ENCODE measurements at regions of chr5 and their contacts with region 1.

Region 1: DNA sequence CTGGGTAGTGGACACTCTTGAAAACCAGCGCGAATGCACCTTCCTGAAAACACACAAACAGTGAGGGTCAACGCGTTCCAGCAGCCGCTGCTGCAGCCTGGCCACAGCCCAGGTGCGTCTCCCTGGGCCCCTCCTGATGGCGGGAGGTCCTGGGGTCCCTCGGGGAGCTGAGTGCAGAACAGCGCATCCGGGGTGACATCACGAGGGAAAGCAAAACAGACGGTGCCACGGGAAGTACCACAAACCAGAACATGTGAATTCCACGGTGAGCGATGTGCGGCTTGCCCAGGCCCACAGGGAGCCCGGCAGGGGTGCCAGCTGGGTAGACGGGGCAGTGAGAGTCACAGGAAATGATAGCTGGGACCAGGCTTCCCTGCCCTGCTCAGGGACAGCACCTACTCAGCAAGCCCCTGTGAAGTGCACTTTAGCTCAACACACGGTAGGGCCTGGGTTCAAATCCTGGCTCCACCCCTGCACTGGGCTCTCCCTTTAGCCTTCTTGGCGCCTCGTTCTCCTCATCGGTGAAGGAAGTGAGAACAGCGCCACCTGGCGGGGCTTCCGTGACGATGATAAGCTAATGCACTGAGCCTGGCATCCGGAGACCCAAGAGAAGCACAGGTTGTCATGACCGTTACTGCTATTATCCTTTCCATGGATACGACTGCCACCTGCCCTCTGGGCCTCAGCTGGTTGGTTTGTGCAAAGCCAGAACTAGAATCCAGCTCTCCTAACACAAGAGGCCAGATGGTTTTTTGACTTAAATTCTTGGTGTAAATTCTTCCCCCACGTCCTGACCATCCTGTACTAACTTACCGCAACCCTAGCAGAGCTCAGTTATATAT is 24.6 kb downstream of the GFPT2 start:
- DNase-seq: peak; percentile 84
- ATAC-seq: peak; percentile 76
- H3K4me3 ChIP-seq: no peak overlapping the region
- H3K4me3 Mint-ChIP-seq: no peak overlapping the region
- H3K27ac ChIP-seq: no peak overlapping the region
- H3K27ac Mint-ChIP-seq: no peak overlapping the region
- H3K4me1 ChIP-seq: peaks cover 0 to 4% of the 10 kb centered on the region in 2 donors
- H3K4me1 Mint-ChIP-seq: no peaks in the 10 kb centered on the region
- H3K27me3 ChIP-seq: peaks cover 0 to 3% (median 0%) of the 10 kb centered on the region in 4 experiments
- H3K27me3 Mint-ChIP-seq: peaks cover 12% of the 10 kb centered on the region
- CTCF ChIP-seq: peak; percentile 82

Region 2: GRCh38 chr5:180126726-180127681 is 201.5 kb before region 1 on chr5:
- CTCF ChIA-PET with region 1: no interaction called
- POLR2A ChIA-PET with region 1: no interaction called
- intact Hi-C with region 1: loop called (anchors 5 kb)
- DNase-seq: peak; percentile 37
- ATAC-seq: no peak
- H3K4me3 ChIP-seq: no peak overlapping the region
- H3K4me3 Mint-ChIP-seq: no peak overlapping the region
- H3K27ac ChIP-seq: no peak overlapping the region
- H3K27ac Mint-ChIP-seq: no peak overlapping the region
- H3K4me1 ChIP-seq: no peaks in the 10 kb centered on the region
- H3K4me1 Mint-ChIP-seq: no peaks in the 10 kb centered on the region
- H3K27me3 ChIP-seq: peaks cover 0 to 4% (median 0%) of the 10 kb centered on the region in 4 experiments
- H3K27me3 Mint-ChIP-seq: peaks cover 6% of the 10 kb centered on the region
- CTCF ChIP-seq: peak; percentile 66

Region 3: GRCh38 chr5:180201051-180201987 is 127.2 kb before region 1 on chr5:
- CTCF ChIA-PET with region 1: no interaction called
- POLR2A ChIA-PET with region 1: no interaction called
- intact Hi-C with region 1: loop called (anchors 5 kb)
- DNase-seq: no peak
- ATAC-seq: no peak
- H3K4me3 ChIP-seq: no peak overlapping the region
- H3K4me3 Mint-ChIP-seq: no peak overlapping the region
- H3K27ac ChIP-seq: no peak overlapping the region
- H3K27ac Mint-ChIP-seq: no peak overlapping the region
- H3K4me1 ChIP-seq: no peaks in the 10 kb centered on the region
- H3K4me1 Mint-ChIP-seq: no peaks in the 10 kb centered on the region
- H3K27me3 ChIP-seq: peaks cover 0 to 4% (median 0%) of the 10 kb centered on the region in 4 experiments
- H3K27me3 Mint-ChIP-seq: peaks cover 24% of the 10 kb centered on the region
- CTCF ChIP-seq: no peak

Region 4: DNA sequence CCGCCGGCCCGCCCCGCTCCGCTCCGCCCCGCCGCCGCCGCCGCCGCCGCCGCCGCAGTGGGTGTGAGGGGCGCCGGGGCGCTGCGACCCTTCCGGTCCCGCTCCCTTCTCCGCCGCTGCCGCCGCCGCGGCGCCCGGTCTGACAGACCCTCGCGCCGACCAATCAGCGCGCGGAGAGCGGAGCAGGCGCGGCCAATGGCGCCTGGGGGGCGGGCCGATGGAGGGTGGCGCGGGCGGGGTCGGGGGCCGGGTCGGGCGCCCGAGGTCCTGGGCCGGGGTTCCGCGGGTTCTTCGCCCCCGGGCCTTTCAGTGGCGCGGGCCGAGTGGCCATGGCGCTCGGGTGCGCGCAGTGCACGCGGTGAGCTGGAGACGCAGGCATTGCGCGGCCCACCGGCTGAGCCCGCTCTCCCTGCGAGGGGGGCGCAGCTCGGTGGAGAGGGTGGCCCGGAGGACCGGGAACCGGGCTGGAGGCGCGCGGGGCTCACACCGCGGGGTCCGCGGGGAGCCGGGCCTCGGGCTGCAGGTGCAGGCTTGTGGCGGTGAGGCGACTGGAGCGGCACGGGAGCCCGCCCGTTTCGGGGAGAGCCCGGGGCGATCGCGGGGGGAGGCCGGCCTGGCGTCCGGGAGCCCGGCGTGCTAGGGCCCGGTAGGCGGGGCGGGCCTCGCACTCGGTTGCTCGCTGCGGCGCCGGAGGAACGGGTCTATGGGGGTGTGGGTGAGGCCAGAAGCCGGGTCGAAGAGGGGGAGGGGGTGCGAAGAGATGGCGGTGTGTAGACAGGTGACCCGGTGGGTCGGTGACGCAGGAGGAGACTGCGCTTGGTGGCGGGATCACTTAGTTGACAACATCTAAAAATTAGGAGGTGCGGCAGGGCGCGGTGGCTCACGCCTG is 36.3 kb before region 1 on chr5 and contains the start of gene MAPK9:
- CTCF ChIA-PET with region 1: interaction called, 55 read pairs
- POLR2A ChIA-PET with region 1: no interaction called
- intact Hi-C with region 1: loop called (anchors 1 kb)
- DNase-seq: peak; percentile 90
- ATAC-seq: peak; percentile 79
- H3K4me3 ChIP-seq: peak within 1 kb of the TSS; percentile 21 to 90 (median 81)
- H3K4me3 Mint-ChIP-seq: peak within 1 kb of the TSS; percentile 92
- H3K27ac ChIP-seq: peak within 1 kb of the TSS; percentile 72 to 95
- H3K27ac Mint-ChIP-seq: peak within 1 kb of the TSS; percentile 94
- H3K4me1 ChIP-seq: peaks cover 32 to 38% of the 10 kb centered on the region in 2 donors
- H3K4me1 Mint-ChIP-seq: peaks cover 49% of the 10 kb centered on the region
- H3K27me3 ChIP-seq: no peaks in the 10 kb centered on the region
- H3K27me3 Mint-ChIP-seq: no peaks in the 10 kb centered on the region
- CTCF ChIP-seq: no peak
- total RNA-seq, gene MAPK9: 39.7 and 40.4 TPM in 2 replicates

Region 5: GRCh38 chr5:180304431-180305375 is 23.8 kb before region 1 on chr5:
- CTCF ChIA-PET with region 1: interaction called, 10 read pairs
- POLR2A ChIA-PET with region 1: no interaction called
- intact Hi-C with region 1: no loop called
- DNase-seq: no peak
- ATAC-seq: no peak
- H3K4me3 ChIP-seq: no peak overlapping the region
- H3K4me3 Mint-ChIP-seq: no peak overlapping the region
- H3K27ac ChIP-seq: no peak overlapping the region
- H3K27ac Mint-ChIP-seq: no peak overlapping the region
- H3K4me1 ChIP-seq: no peaks in the 10 kb centered on the region
- H3K4me1 Mint-ChIP-seq: no peaks in the 10 kb centered on the region
- H3K27me3 ChIP-seq: no peaks in the 10 kb centered on the region
- H3K27me3 Mint-ChIP-seq: peaks cover 12% of the 10 kb centered on the region
- CTCF ChIP-seq: no peak

Region 6: GRCh38 chr5:180315762-180316212 is 12.7 kb before region 1 on chr5:
- CTCF ChIA-PET with region 1: interaction called, 36 read pairs
- POLR2A ChIA-PET with region 1: no interaction called
- intact Hi-C with region 1: loop called (anchors 1 kb)
- DNase-seq: peak; percentile 74
- ATAC-seq: peak; percentile 92
- H3K4me3 ChIP-seq: no peak overlapping the region
- H3K4me3 Mint-ChIP-seq: no peak overlapping the region
- H3K27ac ChIP-seq: no peak overlapping the region
- H3K27ac Mint-ChIP-seq: peak overlapping the region; percentile 21
- H3K4me1 ChIP-seq: no peaks in the 10 kb centered on the region
- H3K4me1 Mint-ChIP-seq: no peaks in the 10 kb centered on the region
- H3K27me3 ChIP-seq: peaks cover 0 to 2% (median 0%) of the 10 kb centered on the region in 4 experiments
- H3K27me3 Mint-ChIP-seq: peaks cover 4% of the 10 kb centered on the region
- CTCF ChIP-seq: peak; percentile 99

Region 7: GRCh38 chr5:180343831-180344327 is 15.4 kb after region 1 on chr5:
- CTCF ChIA-PET with region 1: interaction called, 11 read pairs
- POLR2A ChIA-PET with region 1: no interaction called
- intact Hi-C with region 1: no loop called
- DNase-seq: no peak
- ATAC-seq: no peak
- H3K4me3 ChIP-seq: no peak overlapping the region
- H3K4me3 Mint-ChIP-seq: no peak overlapping the region
- H3K27ac ChIP-seq: no peak overlapping the region
- H3K27ac Mint-ChIP-seq: no peak overlapping the region
- H3K4me1 ChIP-seq: no peaks in the 10 kb centered on the region
- H3K4me1 Mint-ChIP-seq: no peaks in the 10 kb centered on the region
- H3K27me3 ChIP-seq: no peaks in the 10 kb centered on the region
- H3K27me3 Mint-ChIP-seq: peaks cover 29% of the 10 kb centered on the region
- CTCF ChIP-seq: no peak

Region 8: DNA sequence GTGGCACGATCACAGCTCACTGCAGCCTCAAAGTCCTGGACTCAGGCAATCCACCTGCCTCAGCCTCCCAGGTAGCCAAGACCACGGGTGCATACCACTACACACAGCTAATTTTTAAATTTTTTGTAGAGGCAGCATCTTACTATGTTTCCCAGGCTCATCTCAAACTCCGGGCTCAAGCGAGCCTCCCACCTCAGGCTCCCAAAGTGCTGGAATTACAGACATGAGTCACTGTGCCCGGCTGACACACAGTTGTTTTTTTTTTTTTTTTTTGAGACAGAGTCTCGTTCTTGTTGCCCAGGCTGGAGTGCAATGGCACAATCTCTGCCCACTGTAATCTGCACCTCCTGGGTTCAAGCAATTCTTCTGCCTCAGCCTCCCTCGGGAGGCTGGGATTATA is 95.6 kb after region 1 on chr5:
- CTCF ChIA-PET with region 1: no interaction called
- POLR2A ChIA-PET with region 1: no interaction called
- intact Hi-C with region 1: no loop called
- DNase-seq: no peak
- ATAC-seq: no peak
- H3K4me3 ChIP-seq: no peak overlapping the region
- H3K4me3 Mint-ChIP-seq: no peak overlapping the region
- H3K27ac ChIP-seq: no peak overlapping the region
- H3K27ac Mint-ChIP-seq: no peak overlapping the region
- H3K4me1 ChIP-seq: no peaks in the 10 kb centered on the region
- H3K4me1 Mint-ChIP-seq: no peaks in the 10 kb centered on the region
- H3K27me3 ChIP-seq: no peaks in the 10 kb centered on the region
- H3K27me3 Mint-ChIP-seq: no peaks in the 10 kb centered on the region
- CTCF ChIP-seq: no peak

Region 9: GRCh38 chr5:180455873-180456272 is 127.4 kb after region 1 on chr5:
- CTCF ChIA-PET with region 1: no interaction called
- POLR2A ChIA-PET with region 1: no interaction called
- intact Hi-C with region 1: no loop called
- DNase-seq: no peak
- ATAC-seq: no peak
- H3K4me3 ChIP-seq: no peak overlapping the region
- H3K4me3 Mint-ChIP-seq: no peak overlapping the region
- H3K27ac ChIP-seq: no peak overlapping the region
- H3K27ac Mint-ChIP-seq: no peak overlapping the region
- H3K4me1 ChIP-seq: no peaks in the 10 kb centered on the region
- H3K4me1 Mint-ChIP-seq: no peaks in the 10 kb centered on the region
- H3K27me3 ChIP-seq: peaks cover 0 to 6% (median 2%) of the 10 kb centered on the region in 4 experiments
- H3K27me3 Mint-ChIP-seq: peaks cover 22% of the 10 kb centered on the region
- CTCF ChIP-seq: no peak

Region 10: GRCh38 chr5:180816608-180817534 is 488.4 kb after region 1 on chr5:
- CTCF ChIA-PET with region 1: no interaction called
- POLR2A ChIA-PET with region 1: no interaction called
- intact Hi-C with region 1: no loop called
- DNase-seq: peak; percentile 35
- ATAC-seq: peak; percentile 22
- H3K4me3 ChIP-seq: peak overlapping the region in 1 of 5 experiments; percentile 4
- H3K4me3 Mint-ChIP-seq: peak overlapping the region; percentile 64
- H3K27ac ChIP-seq: no peak overlapping the region
- H3K27ac Mint-ChIP-seq: peak overlapping the region; percentile 46
- H3K4me1 ChIP-seq: peaks cover 43 to 53% of the 10 kb centered on the region in 2 donors
- H3K4me1 Mint-ChIP-seq: peaks cover 57% of the 10 kb centered on the region
- H3K27me3 ChIP-seq: no peaks in the 10 kb centered on the region
- H3K27me3 Mint-ChIP-seq: no peaks in the 10 kb centered on the region
- CTCF ChIP-seq: no peak

Measured in B cell (primary cell).